Activated CD8-positive, alpha-beta T cell treated with anti-CD3 and anti-CD28 coated beads, Interleukin-2, amount 10 ng/mL, durations not matched to agents 7 days and 5 days (primary cell): ENCODE measurements at regions of chr16 and their contacts with region 1.

Region 1: DNA sequence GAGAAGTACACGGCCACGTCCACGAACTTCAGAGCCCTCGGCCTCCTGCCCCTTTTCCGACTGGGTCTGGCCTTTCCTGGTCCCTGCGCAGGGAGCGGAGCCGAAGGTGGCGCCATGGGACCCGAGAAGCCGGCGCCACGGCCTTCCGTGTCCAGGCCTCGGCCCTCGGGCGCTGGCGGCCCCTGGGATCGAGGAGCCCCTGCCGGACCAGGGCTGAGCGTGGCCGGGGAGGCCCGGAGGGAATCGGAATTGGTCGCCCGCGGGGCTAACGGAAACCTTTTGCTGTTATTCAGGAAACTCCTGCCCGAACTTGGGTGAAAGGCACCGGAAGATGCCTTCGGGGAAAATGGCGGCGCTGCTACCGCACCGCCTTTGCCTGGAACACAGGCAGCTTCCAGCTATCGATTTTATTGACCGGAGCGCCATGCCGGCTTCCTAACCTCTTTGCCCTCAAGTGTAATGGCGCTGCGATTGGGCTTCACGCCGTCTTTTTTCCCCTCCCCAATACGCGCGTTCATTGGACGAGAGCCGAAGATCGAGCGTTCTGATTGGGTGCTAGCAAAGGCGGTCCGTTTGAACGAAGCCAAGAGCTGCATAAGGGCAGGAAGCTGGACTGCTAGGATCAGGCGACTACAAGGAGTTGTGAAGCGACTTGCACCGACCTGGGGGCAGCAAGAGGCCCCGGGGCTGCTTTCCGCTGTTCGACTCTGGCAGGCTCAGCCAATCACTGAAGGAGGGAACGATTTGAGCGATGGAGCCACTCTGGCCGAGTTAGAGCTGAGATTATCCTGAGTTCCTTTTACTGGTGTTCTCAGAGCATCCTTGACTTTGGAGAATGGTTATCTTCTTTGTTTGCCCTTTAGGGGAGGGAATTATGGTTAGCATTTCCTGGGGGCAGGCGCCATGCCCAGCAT is at the start of gene ZNF689:
- DNase-seq: peak; percentile 97
- ATAC-seq: peak; percentile 92
- H3K4me3 Mint-ChIP-seq: peak within 1 kb of the TSS; percentile 84
- H3K27ac Mint-ChIP-seq: peak within 1 kb of the TSS; percentile 96
- H3K4me1 Mint-ChIP-seq: peaks cover 19% of the 10 kb centered on the region
- H3K27me3 Mint-ChIP-seq: no peaks in the 10 kb centered on the region
- total RNA-seq, gene ZNF689: 12.0 to 13.4 TPM

Region 2: GRCh38 chr16:30509081-30509765 is 101.0 kb before region 1 on chr16:
- CTCF ChIA-PET with region 1: no interaction called
- POLR2A ChIA-PET with region 1: no interaction called
- DNase-seq: no peak
- ATAC-seq: no peak
- H3K4me3 Mint-ChIP-seq: no peak overlapping the region
- H3K27ac Mint-ChIP-seq: no peak overlapping the region
- H3K4me1 Mint-ChIP-seq: peaks cover 7% of the 10 kb centered on the region
- H3K27me3 Mint-ChIP-seq: no peaks in the 10 kb centered on the region

Region 3: GRCh38 chr16:30657866-30658730 is 47.9 kb after region 1 on chr16 and contains the start of gene FBRS:
- CTCF ChIA-PET with region 1: interaction called, 4 read pairs
- POLR2A ChIA-PET with region 1: interaction called, 16 read pairs
- DNase-seq: peak; percentile 100
- ATAC-seq: peak; percentile 77
- H3K4me3 Mint-ChIP-seq: peak within 1 kb of the TSS; percentile 87
- H3K27ac Mint-ChIP-seq: peak within 1 kb of the TSS; percentile 100
- H3K4me1 Mint-ChIP-seq: peaks cover 49% of the 10 kb centered on the region
- H3K27me3 Mint-ChIP-seq: no peaks in the 10 kb centered on the region
- total RNA-seq, gene FBRS: 85.2 to 100 TPM